ENCODE measurements at regions of chr15 and their contacts with region 1.

Region 1: GRCh38 chr15:98658831-98659699 is 10.7 kb downstream of the IGF1R start:
- DNase-seq: no peak
- H3K4me3 ChIP-seq: no peak overlapping the region
- H3K27ac ChIP-seq: no peak overlapping the region
- H3K4me1 ChIP-seq: peaks cover 79% of the 10 kb centered on the region
- H3K27me3 ChIP-seq: no peaks in the 10 kb centered on the region
- CTCF ChIP-seq: peak; percentile 13 to 74 (median 62)
- POLR2A ChIP-seq: no peak

Region 2: DNA sequence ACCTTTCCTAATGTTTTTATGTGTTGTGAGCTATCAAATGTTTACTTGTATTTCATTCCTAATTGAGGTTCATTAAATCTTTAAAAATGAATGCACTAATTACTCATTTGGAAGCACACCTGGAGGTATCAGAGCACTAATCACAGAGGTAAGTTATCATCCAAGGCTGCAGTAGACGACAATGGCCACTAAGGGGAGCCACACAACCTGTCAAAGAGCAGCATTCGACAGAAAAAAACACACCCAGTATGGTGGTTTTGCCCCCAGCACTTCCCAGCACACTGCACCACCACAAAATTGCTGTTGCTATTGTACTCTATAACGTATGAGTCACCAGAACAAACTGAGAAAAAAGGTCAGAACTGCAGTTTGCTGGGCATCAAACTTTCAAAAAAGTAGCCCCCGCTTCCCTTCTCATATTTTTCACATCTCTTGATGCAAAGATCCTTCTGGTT is 216.7 kb before region 1 on chr15:
- intact Hi-C with region 1: loop called (anchors 5 kb)
- DNase-seq: peak in 1 of 2 donors; percentile 70
- H3K4me3 ChIP-seq: no peak overlapping the region
- H3K27ac ChIP-seq: peak overlapping the region; percentile 30
- H3K4me1 ChIP-seq: peaks cover 11% of the 10 kb centered on the region
- H3K27me3 ChIP-seq: no peaks in the 10 kb centered on the region
- CTCF ChIP-seq: peak; percentile 8 to 73 (median 73)
- POLR2A ChIP-seq: no peak

Region 3: GRCh38 chr15:98525661-98526001 is 133.4 kb before region 1 on chr15:
- intact Hi-C with region 1: loop called (anchors 10 kb)
- DNase-seq: no peak
- H3K4me3 ChIP-seq: no peak overlapping the region
- H3K27ac ChIP-seq: peak overlapping the region; percentile 49
- H3K4me1 ChIP-seq: peaks cover 5% of the 10 kb centered on the region
- H3K27me3 ChIP-seq: no peaks in the 10 kb centered on the region
- CTCF ChIP-seq: no peak
- POLR2A ChIP-seq: no peak

Region 4: DNA sequence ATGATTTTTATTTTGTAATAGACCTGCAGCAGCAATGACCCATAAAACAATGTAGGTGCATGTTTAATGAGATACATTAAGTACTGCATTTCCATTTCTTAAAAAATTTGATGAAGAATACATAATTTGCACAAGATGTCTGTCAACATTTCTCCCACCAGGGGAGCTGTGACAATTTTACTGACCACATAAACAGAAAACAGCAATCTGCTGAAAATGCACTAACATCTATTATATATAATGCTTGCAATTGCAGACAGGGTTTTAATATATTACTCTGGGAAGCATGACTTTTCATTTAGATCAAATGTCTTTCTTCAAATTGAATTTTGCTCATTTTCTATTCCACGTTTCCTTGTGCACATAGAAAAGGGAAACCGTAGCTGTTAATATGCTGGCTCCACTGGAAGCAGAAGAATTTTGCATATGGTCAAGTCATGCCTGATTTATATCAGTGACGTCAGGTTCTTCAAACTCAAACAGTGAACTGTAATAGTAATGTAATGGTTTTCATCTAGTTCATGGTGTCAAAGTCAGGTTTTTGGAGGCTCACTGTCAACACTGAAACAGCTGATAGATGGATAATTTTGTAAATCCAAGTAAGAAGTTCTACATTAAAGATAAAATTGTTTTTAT is 90.6 kb before region 1 on chr15:
- intact Hi-C with region 1: no loop called
- DNase-seq: no peak
- H3K4me3 ChIP-seq: no peak overlapping the region
- H3K27ac ChIP-seq: no peak overlapping the region
- H3K4me1 ChIP-seq: no peaks in the 10 kb centered on the region
- H3K27me3 ChIP-seq: no peaks in the 10 kb centered on the region
- CTCF ChIP-seq: no peak
- POLR2A ChIP-seq: no peak

Region 5: DNA sequence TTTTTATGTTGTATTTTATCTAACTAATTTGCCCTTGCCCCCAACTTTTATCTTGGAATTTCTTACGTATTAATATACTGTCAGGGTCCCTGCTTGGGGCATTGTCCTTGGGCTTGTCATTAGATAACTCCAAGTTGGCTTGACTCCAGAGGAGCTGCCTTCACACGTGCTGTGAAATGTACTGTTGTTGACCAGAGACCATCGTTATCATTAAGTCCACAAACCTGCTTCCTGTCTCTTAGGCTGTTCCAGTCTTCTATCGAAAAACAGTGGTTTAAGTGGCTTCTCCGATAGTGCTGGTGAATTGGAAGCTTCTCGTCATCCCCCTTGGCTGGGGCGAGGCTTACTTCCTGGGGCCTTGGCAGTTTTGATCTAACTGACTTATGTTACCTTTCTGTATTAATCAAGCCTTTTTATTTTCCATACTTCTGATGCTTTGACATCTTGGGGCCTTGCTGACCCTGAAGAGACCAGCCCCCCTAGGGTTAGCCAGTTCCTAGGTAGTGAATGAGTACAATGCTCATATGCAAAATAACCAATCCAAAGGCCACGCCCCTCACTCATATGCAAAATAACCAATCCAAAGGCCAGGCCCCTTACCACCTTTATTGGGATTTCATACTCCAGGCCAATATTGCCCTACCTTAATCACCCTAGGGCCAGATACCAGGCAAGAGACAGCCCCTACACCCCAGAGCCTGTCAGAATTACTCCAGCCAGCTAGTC is 153.8 kb after region 1 on chr15:
- intact Hi-C with region 1: no loop called
- DNase-seq: no peak
- H3K4me3 ChIP-seq: no peak overlapping the region
- H3K27ac ChIP-seq: no peak overlapping the region
- H3K4me1 ChIP-seq: peaks cover 38% of the 10 kb centered on the region
- H3K27me3 ChIP-seq: no peaks in the 10 kb centered on the region
- CTCF ChIP-seq: no peak
- POLR2A ChIP-seq: no peak

Region 6: DNA sequence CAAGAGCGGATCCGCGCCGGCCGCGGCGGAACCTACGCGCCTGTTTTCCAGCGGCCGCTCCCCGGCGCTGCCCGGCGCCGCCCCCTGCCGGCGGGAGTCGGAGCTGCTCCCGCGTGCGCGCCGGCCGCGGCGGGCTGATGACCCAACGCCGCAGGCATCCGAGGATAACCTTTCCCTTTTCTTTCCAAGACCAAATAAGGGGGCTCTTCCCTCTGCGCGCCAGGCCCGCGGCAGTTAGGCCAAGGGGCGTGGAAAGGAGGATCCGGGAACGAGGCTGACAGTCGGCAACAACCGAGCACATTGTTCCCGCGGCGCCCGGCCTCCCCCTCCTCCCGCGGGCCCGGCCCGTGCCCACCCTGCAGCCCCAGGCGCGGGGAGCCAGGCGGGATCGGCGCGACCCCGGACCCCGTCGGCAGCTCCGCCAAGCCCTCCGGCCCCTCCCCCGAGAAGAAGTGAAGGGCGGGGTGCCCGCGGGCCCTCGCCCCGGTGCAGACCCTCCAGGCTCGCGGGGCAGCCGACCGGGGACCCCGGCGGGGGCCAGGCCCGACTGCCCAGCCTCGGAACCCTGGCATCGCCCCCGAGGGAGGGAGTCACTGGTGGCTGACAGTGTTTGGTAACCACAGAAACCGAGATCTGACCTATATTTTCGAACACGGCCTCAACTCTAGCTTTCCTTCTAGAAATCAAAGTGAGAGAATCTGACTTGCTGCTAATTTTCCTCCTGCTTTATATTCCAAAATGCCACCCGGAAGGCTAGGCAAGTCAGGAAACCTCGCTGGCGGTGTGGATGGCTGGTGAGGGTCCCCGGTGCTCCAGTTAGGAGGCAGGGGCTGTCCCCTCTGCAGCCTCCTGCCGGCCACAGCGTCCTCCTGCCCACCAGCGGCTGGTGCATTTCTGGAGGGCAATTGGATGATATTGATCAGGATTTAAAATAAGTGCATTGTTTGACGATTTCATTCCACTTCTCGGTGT is 400.2 kb after region 1 on chr15:
- intact Hi-C with region 1: loop called (anchors 10 kb)
- DNase-seq: no peak
- H3K4me3 ChIP-seq: peak overlapping the region; percentile 44 to 69
- H3K27ac ChIP-seq: peak overlapping the region; percentile 85
- H3K4me1 ChIP-seq: peaks cover 3% of the 10 kb centered on the region
- H3K27me3 ChIP-seq: no peaks in the 10 kb centered on the region
- CTCF ChIP-seq: peak; percentile 33 to 88 (median 49)
- POLR2A ChIP-seq: no peak

Measured in vagina (tissue), 2 donors.